Heart left ventricle (tissue), 16 donors: ENCODE measurements at regions of chr19 and their contacts with region 1.

Region 1: DNA sequence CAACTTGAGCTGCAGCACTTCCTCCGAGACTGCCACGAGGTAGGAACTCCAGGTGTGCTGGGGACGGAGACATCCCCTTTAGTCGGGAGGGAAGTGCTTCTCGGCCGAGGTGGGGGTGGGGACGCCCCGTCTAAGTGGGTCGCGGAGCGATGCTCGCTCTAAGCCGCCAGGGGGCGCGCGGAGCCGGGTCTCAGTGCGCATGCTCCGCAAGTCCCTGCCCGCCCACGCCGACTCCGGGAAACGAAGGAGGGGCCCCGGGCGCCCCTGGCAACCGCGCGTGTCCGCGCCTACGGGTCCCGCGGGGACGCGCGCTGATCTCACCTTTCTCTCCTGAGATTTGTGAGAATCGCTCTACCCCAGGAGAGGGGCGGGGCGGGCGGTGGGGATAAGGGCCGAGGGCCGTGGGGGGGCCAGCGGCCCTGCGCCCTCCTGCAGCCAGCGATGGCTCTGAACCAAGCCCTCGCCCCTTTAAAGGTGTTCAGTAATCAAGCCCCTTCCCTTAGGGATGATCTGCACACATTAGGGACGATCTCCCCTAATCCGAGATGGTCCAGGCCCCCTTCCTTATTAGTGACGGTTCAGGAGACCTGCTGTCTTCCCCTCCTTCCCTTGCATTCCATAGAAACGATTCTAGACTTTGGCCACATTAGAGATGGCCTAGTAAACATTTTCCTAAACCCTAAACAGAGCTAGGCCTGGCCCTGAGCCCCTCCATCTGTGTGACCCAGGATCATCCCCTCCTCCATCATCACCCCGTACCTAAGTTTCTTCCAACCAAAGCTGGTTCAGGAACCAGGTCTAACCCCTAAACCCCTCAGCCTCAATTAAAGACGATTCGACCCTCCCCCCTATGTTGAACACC is 47.3 kb upstream of the SHKBP1 start:
- DNase-seq: peak; percentile 82 to 94 (median 86)
- ATAC-seq: peak; percentile 66 to 91 (median 88)
- H3K4me3 ChIP-seq: peak overlapping the region; percentile 24 to 66 (median 59)
- H3K27ac ChIP-seq: peak overlapping the region in 1 of 12 donors; percentile 59
- H3K4me1 ChIP-seq: peaks cover 0 to 15% (median 8%) of the 10 kb centered on the region in 12 donors
- H3K27me3 ChIP-seq: peaks cover 0 to 11% (median 0%) of the 10 kb centered on the region in 9 donors
- CTCF ChIP-seq: peak; percentile 92 to 99 (median 96)
- POLR2A ChIP-seq: no peak

Region 2: GRCh38 chr19:40305403-40305802 is 223.9 kb before region 1 on chr19:
- intact Hi-C with region 1: loop called in 7 of 10 experiments (anchors 5 to 10 kb)
- DNase-seq: peak; percentile 81 to 83 (median 82)
- ATAC-seq: peak; percentile 58 to 83 (median 75)
- H3K4me3 ChIP-seq: no peak overlapping the region
- H3K27ac ChIP-seq: no peak overlapping the region
- H3K4me1 ChIP-seq: peaks cover 0 to 5% (median 0%) of the 10 kb centered on the region in 12 donors
- H3K27me3 ChIP-seq: no peaks in the 10 kb centered on the region
- CTCF ChIP-seq: peak; percentile 63 to 86 (median 77)
- POLR2A ChIP-seq: no peak

Region 3: DNA sequence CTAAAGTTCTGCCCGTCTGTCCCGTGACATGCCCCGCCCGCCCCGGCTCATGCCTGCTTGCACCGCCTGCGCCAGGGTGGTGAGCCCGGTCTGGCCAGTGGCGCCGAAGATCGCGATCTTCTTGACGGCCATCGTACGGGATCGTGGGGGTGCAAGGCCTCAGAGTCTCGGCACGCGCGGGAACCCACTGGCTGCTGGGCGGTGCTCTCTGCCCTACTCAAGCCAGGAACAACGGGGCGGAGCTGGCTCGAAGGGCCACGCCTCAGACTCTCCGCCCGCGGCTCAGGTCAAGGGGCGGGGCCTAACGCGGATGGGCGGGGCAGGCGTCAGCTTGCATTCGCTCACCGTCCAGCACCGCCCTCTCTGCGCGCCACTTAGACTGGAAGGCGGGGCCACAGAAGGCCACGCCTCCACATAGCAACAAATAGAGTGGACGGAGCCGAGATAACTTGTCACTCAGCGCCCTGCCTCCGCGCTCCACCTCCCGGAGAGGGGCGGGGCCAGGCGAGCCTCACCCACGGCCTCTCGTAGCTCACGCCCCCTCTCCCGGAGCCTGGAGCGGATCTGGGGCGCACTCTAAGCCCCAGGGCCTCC is 63.7 kb before region 1 on chr19 and contains the start of gene BLVRB:
- intact Hi-C with region 1: loop called in 3 of 10 experiments (anchors 5 to 10 kb)
- DNase-seq: peak; percentile 99 to 100 (median 99)
- ATAC-seq: peak; percentile 96 to 97 (median 97)
- H3K4me3 ChIP-seq: peak within 1 kb of the TSS; percentile 50 to 85 (median 78)
- H3K27ac ChIP-seq: peak within 1 kb of the TSS; percentile 28 to 96 (median 86)
- H3K4me1 ChIP-seq: peaks cover 0 to 55% (median 19%) of the 10 kb centered on the region in 12 donors
- H3K27me3 ChIP-seq: peaks cover 0 to 12% (median 0%) of the 10 kb centered on the region in 9 donors
- CTCF ChIP-seq: no peak
- POLR2A ChIP-seq: peak; percentile 28 to 90
- total RNA-seq, gene BLVRB: 76.3 to 330 (median 100) TPM

Region 4: GRCh38 chr19:40576585-40577451 is 47.5 kb after region 1 on chr19 and contains the start of gene SHKBP1:
- intact Hi-C with region 1: loop called in 2 of 10 experiments (anchors 5 kb)
- DNase-seq: peak; percentile 95 to 97 (median 97)
- ATAC-seq: peak; percentile 98 to 99 (median 99)
- H3K4me3 ChIP-seq: peak within 1 kb of the TSS; percentile 63 to 94 (median 77)
- H3K27ac ChIP-seq: peak within 1 kb of the TSS; percentile 41 to 93 (median 78)
- H3K4me1 ChIP-seq: peaks cover 0 to 36% (median 8%) of the 10 kb centered on the region in 12 donors
- H3K27me3 ChIP-seq: no peaks in the 10 kb centered on the region
- CTCF ChIP-seq: no peak
- POLR2A ChIP-seq: peak in 1 of 2 donors; percentile 64
- total RNA-seq, gene SHKBP1: 16.4 to 52.8 (median 18.4) TPM

Region 5: DNA sequence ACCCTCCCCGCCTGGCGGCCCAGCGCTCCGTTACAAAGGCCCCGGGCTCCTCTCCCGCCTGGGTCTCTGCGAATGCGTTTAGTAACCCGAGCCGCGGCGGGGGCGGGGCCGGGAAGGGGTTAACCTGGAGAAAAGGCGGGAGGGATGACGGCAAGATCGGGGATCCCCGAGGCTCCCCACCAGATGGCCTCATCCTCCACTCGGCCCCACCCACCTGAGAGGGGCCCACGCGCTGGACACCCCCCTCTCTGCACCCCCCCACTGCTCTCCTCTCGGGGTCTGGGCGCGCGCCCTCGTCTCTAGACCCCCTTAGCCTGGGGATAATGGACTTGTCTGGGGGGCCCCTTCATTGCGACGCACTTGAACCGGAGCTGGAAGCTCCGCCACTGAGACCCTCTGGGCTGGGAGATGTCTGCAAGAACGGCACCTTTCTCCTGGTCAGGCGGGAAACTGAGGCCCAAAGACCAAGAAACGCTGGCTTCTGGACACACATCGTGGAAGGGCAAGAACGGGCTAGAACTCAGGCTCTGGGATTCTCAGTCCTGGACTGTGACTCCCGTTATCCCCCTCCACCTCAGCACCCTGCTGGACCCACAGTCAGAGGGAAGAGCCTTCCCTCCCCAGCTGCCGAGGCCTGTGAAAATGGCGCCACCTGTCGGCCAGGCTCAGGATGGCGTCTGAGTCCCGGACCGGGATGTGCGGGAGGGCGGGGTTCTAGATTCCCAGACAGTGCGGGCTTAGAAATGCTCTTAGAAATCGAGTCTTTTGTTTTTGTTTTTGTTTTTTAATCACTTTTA is 69.0 kb after region 1 on chr19:
- intact Hi-C with region 1: loop called (anchors 1 to 5 kb)
- DNase-seq: peak; percentile 85 to 93 (median 89)
- ATAC-seq: peak; percentile 57 to 74 (median 60)
- H3K4me3 ChIP-seq: peak overlapping the region in 7 of 12 donors; percentile 4 to 96 (median 72)
- H3K27ac ChIP-seq: peak overlapping the region in 6 of 12 donors; percentile 5 to 97 (median 84)
- H3K4me1 ChIP-seq: peaks cover 0 to 67% (median 52%) of the 10 kb centered on the region in 12 donors
- H3K27me3 ChIP-seq: peaks cover 9 to 63% (median 20%) of the 10 kb centered on the region in 9 donors
- CTCF ChIP-seq: peak; percentile 93 to 99 (median 98)
- POLR2A ChIP-seq: no peak

Region 6: GRCh38 chr19:40633207-40633606 is 103.9 kb after region 1 on chr19:
- intact Hi-C with region 1: loop called in 5 of 10 experiments (anchors 1 to 10 kb)
- DNase-seq: no peak
- ATAC-seq: no peak
- H3K4me3 ChIP-seq: no peak overlapping the region
- H3K27ac ChIP-seq: no peak overlapping the region
- H3K4me1 ChIP-seq: peaks cover 0 to 19% (median 7%) of the 10 kb centered on the region in 12 donors
- H3K27me3 ChIP-seq: no peaks in the 10 kb centered on the region
- CTCF ChIP-seq: no peak
- POLR2A ChIP-seq: no peak

Region 7: DNA sequence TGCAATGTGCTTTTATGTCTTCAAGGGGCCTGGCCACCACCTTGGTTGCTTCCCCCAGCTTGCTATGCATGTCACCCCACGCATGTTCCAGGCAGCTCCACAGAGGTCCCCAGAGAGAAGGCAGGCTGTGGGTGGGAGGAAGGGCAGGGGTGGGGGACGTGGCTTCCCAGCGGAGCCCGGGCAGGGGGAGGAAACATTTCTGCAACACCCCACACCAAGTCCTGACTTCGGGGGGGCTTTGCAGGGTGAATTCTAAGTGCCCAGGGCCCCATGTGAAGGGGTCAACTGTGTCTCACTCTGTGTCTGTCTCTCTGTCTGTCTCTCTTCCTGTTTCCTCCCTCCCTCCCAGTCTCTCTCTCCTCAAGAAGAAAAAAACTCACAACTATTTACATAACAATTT is 111.4 kb after region 1 on chr19:
- intact Hi-C with region 1: loop called in 2 of 10 experiments (anchors 5 to 10 kb)
- DNase-seq: peak in 3 of 5 donors; percentile 45 to 70 (median 53)
- ATAC-seq: peak in 3 of 4 donors; percentile 58 to 63 (median 61)
- H3K4me3 ChIP-seq: no peak overlapping the region
- H3K27ac ChIP-seq: peak overlapping the region in 10 of 12 donors; percentile 44 to 85 (median 63)
- H3K4me1 ChIP-seq: peaks cover 0 to 39% (median 12%) of the 10 kb centered on the region in 12 donors
- H3K27me3 ChIP-seq: no peaks in the 10 kb centered on the region
- CTCF ChIP-seq: no peak
- POLR2A ChIP-seq: no peak

Region 8: GRCh38 chr19:40813182-40813958 is 284.0 kb after region 1 on chr19:
- intact Hi-C with region 1: no loop called
- DNase-seq: no peak
- ATAC-seq: no peak
- H3K4me3 ChIP-seq: no peak overlapping the region
- H3K27ac ChIP-seq: no peak overlapping the region
- H3K4me1 ChIP-seq: peaks cover 4 to 46% (median 31%) of the 10 kb centered on the region in 12 donors
- H3K27me3 ChIP-seq: no peaks in the 10 kb centered on the region
- CTCF ChIP-seq: no peak
- POLR2A ChIP-seq: no peak